GM10248 (cell line): ENCODE measurements at regions of chr17 and their contacts with region 1.

Region 1: GRCh38 chr17:78324391-78325075 is 35.3 kb downstream of the SOCS3 start:
- DNase-seq: peak; percentile 41
- CTCF ChIP-seq: no peak

Region 2: DNA sequence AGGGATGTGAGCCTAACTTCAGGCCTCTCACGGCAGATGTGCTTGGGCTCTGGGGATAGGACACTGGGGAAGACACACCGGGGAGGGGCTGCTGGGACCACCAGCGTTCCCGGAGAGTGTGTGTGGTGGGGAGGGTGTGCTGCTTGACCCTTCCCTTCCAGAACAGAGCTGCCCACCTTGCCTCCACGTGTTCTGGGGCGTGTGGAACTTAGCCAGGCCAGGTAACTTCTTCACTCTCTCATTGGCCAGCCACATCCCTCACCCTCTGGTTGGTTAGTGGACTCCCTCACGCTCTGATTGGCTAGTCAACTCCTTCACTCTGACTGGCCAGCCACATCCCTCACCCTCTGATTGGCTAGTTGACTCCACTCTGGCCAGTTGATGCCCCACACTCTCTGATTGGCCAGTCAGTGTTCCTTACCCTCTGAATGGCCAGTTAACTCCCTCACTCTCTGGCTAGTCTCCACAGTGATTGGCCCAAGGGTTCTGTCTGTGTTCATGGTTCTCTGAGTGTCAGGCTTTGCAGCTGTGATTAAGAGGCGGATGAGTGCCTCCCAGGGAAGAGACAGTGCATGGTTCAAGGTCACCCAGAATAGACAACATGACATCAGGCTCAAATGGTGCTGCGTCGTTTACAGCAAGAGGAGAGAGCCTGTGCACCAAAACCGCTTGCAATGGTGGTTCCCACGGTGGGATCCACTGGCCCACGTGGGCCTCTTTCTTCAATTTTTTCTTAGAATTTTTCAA is 83.1 kb before region 1 on chr17:
- CTCF ChIA-PET with region 1: no interaction called
- POLR2A ChIA-PET with region 1: no interaction called
- DNase-seq: no peak
- CTCF ChIP-seq: no peak

Region 3: GRCh38 chr17:78341559-78342448 is 17.3 kb after region 1 on chr17:
- CTCF ChIA-PET with region 1: interaction called, 12 read pairs
- POLR2A ChIA-PET with region 1: no interaction called
- DNase-seq: peak; percentile 50
- CTCF ChIP-seq: no peak

Region 4: GRCh38 chr17:78432226-78433012 is 107.9 kb after region 1 on chr17:
- CTCF ChIA-PET with region 1: no interaction called
- POLR2A ChIA-PET with region 1: no interaction called
- DNase-seq: no peak
- CTCF ChIP-seq: no peak